ENCODE measurements at regions of chr18 and their contacts with region 1.

Region 1: DNA sequence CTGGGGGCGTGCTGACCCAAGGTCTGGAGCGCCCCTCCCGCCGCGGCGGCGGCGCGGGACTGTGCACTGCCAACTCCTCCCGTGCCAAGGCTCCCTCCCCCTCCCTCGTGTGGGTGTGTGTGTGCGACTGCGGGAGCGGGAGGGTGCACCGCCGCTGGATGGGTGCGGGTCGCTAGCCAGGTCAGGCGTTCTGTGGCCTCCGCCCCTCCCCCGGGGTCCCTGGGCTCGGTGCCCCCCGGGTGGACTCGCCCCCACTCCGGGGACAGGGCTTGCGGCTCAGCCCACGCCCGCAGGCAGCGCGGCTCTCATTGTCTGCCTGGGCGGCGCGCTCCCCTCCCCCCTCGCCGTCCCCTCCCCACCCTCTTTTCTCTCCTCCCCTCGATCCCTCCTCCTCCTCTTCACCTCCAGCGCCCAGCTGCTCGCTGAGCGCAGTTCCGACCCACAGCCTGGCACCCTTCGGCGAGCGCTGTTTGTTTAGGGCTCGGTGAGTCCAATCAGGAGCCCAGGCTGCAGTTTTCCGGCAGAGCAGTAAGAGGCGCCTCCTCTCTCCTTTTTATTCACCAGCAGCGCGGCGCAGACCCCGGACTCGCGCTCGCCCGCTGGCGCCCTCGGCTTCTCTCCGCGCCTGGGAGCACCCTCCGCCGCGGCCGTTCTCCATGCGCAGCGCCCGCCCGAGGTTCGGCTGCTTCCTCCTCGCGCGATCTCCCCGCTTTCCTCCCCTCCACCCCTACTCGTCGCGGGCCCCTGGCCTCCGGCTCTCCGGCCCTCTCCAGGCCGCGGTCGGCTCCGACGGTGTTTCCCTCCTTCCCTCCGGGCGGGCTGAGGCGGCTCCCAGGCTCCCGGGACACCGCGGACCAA is at the start of gene GATA6:
- DNase-seq: peak; percentile 92
- ATAC-seq: peak; percentile 85
- total RNA-seq, gene GATA6: 56.3 TPM

Region 2: GRCh38 chr18:21914739-21915319 is 254.4 kb before region 1 on chr18:
- intact Hi-C with region 1: loop called (anchors 5 kb)
- DNase-seq: no peak
- ATAC-seq: peak; percentile 67

Region 3: DNA sequence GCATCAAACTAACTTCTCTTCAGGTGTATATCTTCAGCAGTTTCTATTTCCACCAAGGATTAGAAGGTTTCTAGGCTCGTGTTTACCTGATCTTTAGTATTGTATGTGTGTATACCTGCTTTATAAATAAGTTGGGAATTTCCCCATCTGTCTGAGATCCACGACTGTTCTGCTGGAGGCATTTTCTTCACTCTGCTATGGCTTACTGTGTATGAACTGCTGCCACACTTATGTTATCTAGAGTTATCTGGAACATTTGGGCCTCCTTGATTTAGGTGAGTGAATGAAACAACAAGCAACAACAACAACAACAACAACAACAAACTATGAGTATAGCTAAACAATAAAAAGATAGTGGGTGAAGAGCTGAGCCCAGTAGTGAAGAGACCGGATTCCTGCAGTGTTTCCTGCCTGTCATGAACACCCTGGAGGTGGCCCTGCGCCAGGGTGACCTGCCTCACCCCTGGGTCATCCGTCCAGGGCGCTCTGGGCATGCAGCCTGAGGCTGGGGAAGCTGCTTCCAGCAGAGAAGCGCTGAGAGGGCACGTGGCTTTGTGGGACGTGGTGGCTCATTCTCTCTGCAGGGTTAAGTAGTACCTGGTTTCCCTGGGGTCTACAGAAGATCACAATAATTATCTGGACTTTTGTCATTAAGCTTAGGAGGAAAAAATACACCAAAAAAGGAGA is 55.9 kb before region 1 on chr18:
- intact Hi-C with region 1: loop called (anchors 5 kb)
- DNase-seq: peak; percentile 82
- ATAC-seq: peak; percentile 93

Region 4: DNA sequence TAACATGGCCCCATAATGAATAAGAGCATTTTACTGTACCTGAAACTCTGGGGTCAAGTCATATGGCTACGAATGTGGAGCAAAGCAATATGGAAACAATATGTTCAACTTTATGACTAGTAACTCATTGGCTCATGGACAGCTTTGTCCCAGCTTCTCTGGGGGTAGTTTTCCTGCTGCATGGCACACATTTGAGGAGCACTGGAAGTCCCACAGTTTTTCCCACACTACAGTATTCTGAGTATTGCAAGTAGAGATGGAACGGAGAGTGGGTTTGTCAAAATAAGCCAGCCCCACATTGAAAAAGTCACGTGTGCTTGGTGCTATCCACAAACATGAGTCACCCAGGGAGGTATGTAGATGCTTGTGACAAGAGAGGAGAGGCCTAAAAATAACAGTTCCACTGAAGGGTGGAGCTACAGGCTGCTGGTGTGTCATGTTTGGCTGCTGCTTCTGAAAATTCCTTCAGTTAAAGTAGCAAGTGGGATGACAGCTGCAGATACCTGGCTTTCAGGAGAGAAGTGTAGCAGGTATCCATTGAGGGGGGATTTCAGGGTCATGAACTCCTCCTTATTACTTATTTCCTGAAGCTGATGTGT is 296.7 kb after region 1 on chr18:
- intact Hi-C with region 1: loop called (anchors 5 kb)
- DNase-seq: no peak
- ATAC-seq: peak; percentile 90